Caco-2 (cell line): ENCODE measurements at regions of chr10 and their contacts with region 1.

Region 1: DNA sequence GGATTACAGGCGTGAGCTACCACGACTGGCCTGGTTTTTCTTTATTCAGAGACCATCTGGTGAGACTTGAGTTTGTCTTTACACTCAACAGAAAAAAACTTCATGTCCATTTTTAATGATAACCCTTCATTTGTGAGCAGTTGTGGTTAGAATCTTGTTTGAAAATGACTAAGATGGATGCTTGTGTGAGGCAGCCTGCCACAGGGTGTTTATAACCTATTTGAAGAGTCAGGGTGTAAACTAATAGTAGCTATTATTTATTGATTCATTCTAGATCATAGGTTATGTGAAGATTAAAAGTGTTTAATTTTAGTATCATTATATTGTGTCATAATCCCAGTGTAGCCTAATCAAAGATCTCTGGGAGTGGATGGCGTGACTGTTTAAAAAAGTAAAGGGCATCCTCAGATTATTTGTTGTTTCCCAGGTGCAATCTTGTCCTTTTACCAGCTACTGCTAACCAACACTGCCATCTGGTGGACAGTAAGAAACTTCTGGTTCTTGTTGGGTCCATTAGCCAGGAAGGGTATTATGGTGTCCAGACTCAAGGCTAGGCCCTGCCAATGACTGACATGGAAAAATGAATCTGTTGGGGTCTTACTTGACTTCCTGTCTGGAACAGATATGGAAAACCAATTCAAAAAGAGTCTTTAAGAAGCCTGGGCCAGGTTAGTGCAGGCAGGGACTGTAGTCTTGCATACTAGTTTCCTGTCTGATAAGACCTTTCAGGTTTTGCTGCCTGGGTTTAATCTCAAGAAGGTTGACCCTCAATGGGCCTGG is 24.9 kb downstream of the NRBF2 start:
- DNase-seq: peak; percentile 70 to 80
- H3K4me3 ChIP-seq: no peak overlapping the region
- H3K4me3 Mint-ChIP-seq: no peak overlapping the region
- H3K27ac Mint-ChIP-seq: no peak overlapping the region
- H3K4me1 ChIP-seq: no peaks in the 10 kb centered on the region
- H3K4me1 Mint-ChIP-seq: no peaks in the 10 kb centered on the region
- H3K27me3 ChIP-seq: no peaks in the 10 kb centered on the region
- H3K27me3 Mint-ChIP-seq: no peaks in the 10 kb centered on the region
- CTCF ChIP-seq: peak; percentile 91 to 92

Region 2: DNA sequence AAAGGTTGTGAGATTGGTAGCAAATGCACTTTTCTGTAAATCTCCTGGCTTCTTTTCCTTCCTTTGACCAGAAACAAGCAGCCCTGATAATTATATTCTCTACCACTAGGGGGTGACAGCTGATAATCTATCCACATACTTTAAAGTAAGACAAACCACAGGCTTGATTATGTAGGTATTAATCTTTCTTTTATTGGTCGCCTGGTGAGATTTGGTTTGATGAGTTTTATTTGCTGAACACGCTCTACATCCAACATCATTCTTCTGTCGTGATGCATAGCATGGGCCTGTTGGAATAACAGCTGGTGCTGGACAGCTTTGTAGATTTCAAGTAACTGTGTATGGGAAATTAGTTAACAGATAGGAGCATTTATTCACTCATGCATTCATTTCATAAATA is 720.3 kb before region 1 on chr10:
- CTCF ChIA-PET with region 1: no interaction called
- POLR2A ChIA-PET with region 1: no interaction called
- intact Hi-C with region 1: loop called (anchors 1 kb)
- DNase-seq: peak in 1 of 2 experiments; percentile 79
- H3K4me3 ChIP-seq: no peak overlapping the region
- H3K4me3 Mint-ChIP-seq: no peak overlapping the region
- H3K27ac Mint-ChIP-seq: no peak overlapping the region
- H3K4me1 ChIP-seq: no peaks in the 10 kb centered on the region
- H3K4me1 Mint-ChIP-seq: no peaks in the 10 kb centered on the region
- H3K27me3 ChIP-seq: no peaks in the 10 kb centered on the region
- H3K27me3 Mint-ChIP-seq: peaks cover 21% of the 10 kb centered on the region
- CTCF ChIP-seq: peak; percentile 85

Region 3: DNA sequence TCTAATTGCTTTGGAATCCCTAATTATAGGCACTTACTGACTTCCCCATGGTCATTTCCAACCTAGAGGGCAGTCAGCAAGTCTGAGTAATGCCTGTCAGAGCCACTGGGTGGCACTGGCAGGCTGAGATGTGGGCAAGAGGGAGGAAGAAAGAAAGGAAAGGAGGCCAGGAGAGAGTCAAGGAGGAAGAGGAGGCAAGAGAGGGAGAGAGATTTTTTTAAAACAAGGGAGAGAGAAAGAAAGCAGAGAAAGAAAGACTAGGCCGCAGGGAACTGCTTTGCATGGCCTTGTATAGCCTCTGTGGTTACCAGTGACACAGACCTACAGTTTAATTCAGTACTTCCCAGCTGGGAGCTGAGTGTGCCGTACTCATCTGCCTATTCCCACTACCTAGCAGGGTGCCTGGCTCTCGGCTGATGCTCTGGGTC is 563.9 kb before region 1 on chr10:
- CTCF ChIA-PET with region 1: interaction called, 5 read pairs
- POLR2A ChIA-PET with region 1: no interaction called
- intact Hi-C with region 1: loop called (anchors 1 kb)
- DNase-seq: peak; percentile 68 to 82
- H3K4me3 ChIP-seq: no peak overlapping the region
- H3K4me3 Mint-ChIP-seq: no peak overlapping the region
- H3K27ac Mint-ChIP-seq: no peak overlapping the region
- H3K4me1 ChIP-seq: no peaks in the 10 kb centered on the region
- H3K4me1 Mint-ChIP-seq: no peaks in the 10 kb centered on the region
- H3K27me3 ChIP-seq: no peaks in the 10 kb centered on the region
- H3K27me3 Mint-ChIP-seq: peaks cover 12% of the 10 kb centered on the region
- CTCF ChIP-seq: peak; percentile 99

Region 4: GRCh38 chr10:62769574-62770242 is 388.3 kb before region 1 on chr10:
- CTCF ChIA-PET with region 1: no interaction called
- POLR2A ChIA-PET with region 1: no interaction called
- intact Hi-C with region 1: no loop called
- DNase-seq: no peak
- H3K4me3 ChIP-seq: no peak overlapping the region
- H3K4me3 Mint-ChIP-seq: no peak overlapping the region
- H3K27ac Mint-ChIP-seq: no peak overlapping the region
- H3K4me1 ChIP-seq: peaks cover 20% of the 10 kb centered on the region
- H3K4me1 Mint-ChIP-seq: peaks cover 18% of the 10 kb centered on the region
- H3K27me3 ChIP-seq: no peaks in the 10 kb centered on the region
- H3K27me3 Mint-ChIP-seq: no peaks in the 10 kb centered on the region
- CTCF ChIP-seq: no peak

Region 5: GRCh38 chr10:63003816-63004453 is 154.1 kb before region 1 on chr10:
- CTCF ChIA-PET with region 1: no interaction called
- POLR2A ChIA-PET with region 1: no interaction called
- intact Hi-C with region 1: loop called (anchors 1 kb)
- DNase-seq: no peak
- H3K4me3 ChIP-seq: no peak overlapping the region
- H3K4me3 Mint-ChIP-seq: no peak overlapping the region
- H3K27ac Mint-ChIP-seq: no peak overlapping the region
- H3K4me1 ChIP-seq: no peaks in the 10 kb centered on the region
- H3K4me1 Mint-ChIP-seq: no peaks in the 10 kb centered on the region
- H3K27me3 ChIP-seq: no peaks in the 10 kb centered on the region
- H3K27me3 Mint-ChIP-seq: peaks cover 24% of the 10 kb centered on the region
- CTCF ChIP-seq: peak; percentile 35 to 49

Region 6: DNA sequence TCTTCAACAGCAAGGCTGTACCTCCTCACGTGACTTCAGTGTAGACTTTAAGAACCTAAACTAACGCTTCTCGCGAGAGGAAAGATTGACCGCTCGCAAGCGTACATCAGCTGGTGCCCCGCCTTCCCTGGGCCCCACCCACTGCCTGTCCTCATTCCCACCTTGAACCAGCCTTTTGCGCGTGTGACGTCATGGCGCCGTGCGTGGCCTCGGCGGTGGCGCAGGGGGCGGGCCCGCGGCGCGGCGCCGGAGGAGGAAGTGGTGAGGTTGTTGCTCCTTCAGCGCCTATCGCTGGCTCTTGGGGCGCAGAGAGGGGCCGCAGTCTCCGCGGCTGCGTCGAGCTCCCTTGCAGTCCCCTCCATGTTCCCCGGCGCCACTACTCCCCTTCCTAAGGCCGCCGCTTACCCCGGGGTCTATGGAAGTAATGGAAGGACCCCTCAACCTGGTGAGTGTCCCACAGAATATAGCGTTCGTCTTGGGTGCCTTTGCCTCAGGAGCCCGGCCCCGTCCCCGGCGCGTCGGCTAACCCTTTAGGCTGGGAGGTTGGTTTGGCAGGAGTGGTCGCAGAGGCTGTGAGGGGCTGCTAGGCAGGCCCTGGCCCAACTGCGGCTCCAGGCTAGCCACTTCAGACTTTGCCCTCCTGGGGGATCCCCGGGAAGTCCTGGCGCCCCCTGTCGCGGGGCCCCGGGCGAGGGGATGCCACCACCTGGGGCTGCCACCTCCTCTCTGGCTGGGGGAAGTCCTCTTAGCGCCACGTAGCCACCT is 24.8 kb before region 1 on chr10 and contains the start of gene NRBF2:
- CTCF ChIA-PET with region 1: interaction called, 12 read pairs
- POLR2A ChIA-PET with region 1: no interaction called
- intact Hi-C with region 1: loop called (anchors 1 kb)
- DNase-seq: peak; percentile 100
- H3K4me3 ChIP-seq: peak within 1 kb of the TSS; percentile 60
- H3K4me3 Mint-ChIP-seq: peak within 1 kb of the TSS; percentile 94
- H3K27ac Mint-ChIP-seq: peak within 1 kb of the TSS; percentile 91
- H3K4me1 ChIP-seq: peaks cover 14% of the 10 kb centered on the region
- H3K4me1 Mint-ChIP-seq: peaks cover 35% of the 10 kb centered on the region
- H3K27me3 ChIP-seq: no peaks in the 10 kb centered on the region
- H3K27me3 Mint-ChIP-seq: no peaks in the 10 kb centered on the region
- CTCF ChIP-seq: peak; percentile 32 to 71
- total RNA-seq, gene NRBF2: 49.1 and 52.5 TPM in 2 replicates